ENCODE measurements at regions of chr3 and their contacts with region 1.

Region 1: GRCh38 chr3:25789596-25790556 is at the start of gene OXSM:
- DNase-seq: peak; percentile 87 to 94 (median 90)
- ATAC-seq: peak; percentile 96 to 99 (median 98)
- H3K4me3 ChIP-seq: peak within 1 kb of the TSS; percentile 40 to 68 (median 52)
- H3K27ac ChIP-seq: peak within 1 kb of the TSS; percentile 71 to 89 (median 78)
- H3K4me1 ChIP-seq: peaks cover 5 to 18% (median 16%) of the 10 kb centered on the region in 3 donors
- H3K27me3 ChIP-seq: no peaks in the 10 kb centered on the region
- CTCF ChIP-seq: no peak
- total RNA-seq, gene OXSM: 3.5 to 7.7 (median 6.4) TPM

Region 2: GRCh38 chr3:25468866-25469319 is 321.0 kb before region 1 on chr3:
- intact Hi-C with region 1: no loop called
- DNase-seq: no peak
- ATAC-seq: peak in 3 of 4 donors; percentile 53 to 63 (median 60)
- H3K4me3 ChIP-seq: no peak overlapping the region
- H3K27ac ChIP-seq: no peak overlapping the region
- H3K4me1 ChIP-seq: no peaks in the 10 kb centered on the region
- H3K27me3 ChIP-seq: no peaks in the 10 kb centered on the region
- CTCF ChIP-seq: no peak

Region 3: DNA sequence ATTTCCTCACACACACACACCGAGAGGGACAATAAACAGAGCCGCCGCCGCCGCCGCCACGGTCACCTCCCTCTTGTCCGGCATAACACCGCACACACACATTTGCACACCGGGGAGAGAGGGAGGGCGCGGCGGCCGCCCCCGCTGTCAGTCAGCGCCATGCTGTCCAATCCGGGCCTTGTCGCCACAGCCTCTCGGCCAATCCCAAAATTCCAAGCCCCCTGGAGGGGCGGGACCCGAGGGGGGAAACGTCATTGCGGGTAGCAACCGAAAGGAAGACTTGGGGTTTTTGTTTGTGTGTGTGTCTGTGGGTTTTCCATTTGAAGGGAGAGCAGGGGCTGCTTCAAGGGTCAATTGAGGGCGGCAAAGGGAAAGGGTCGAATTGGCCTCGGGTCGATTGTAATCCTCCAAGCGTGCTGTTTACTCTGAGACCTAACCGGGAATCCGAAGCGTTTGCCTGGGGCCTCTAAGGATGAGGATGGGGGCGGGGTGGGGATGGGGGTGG is 125.0 kb before region 1 on chr3 and contains the start of gene TOP2B:
- intact Hi-C with region 1: loop called in 1 of 3 experiments (anchors 10 kb)
- DNase-seq: peak; percentile 93 to 97 (median 96)
- ATAC-seq: peak; percentile 95 to 98 (median 96)
- H3K4me3 ChIP-seq: peak within 1 kb of the TSS; percentile 58 to 76 (median 66)
- H3K27ac ChIP-seq: peak within 1 kb of the TSS; percentile 82 to 97 (median 94)
- H3K4me1 ChIP-seq: peaks cover 25 to 31% (median 26%) of the 10 kb centered on the region in 3 donors
- H3K27me3 ChIP-seq: no peaks in the 10 kb centered on the region
- CTCF ChIP-seq: no peak
- total RNA-seq, gene TOP2B: 28.9 to 67.7 (median 40.2) TPM

Measured in pancreas (tissue), 10 donors.